ENCODE measurements at regions of chr6 and their contacts with region 1.

Region 1: GRCh38 chr6:112029045-112029822 is 24.7 kb upstream of the CCN6 start:
- DNase-seq: peak; percentile 68
- ATAC-seq: peak; percentile 86
- H3K4me3 ChIP-seq: no peak overlapping the region
- H3K27ac ChIP-seq: no peak overlapping the region
- H3K4me1 ChIP-seq: peaks cover 46% of the 10 kb centered on the region
- H3K27me3 ChIP-seq: peaks cover 0 to 7% of the 10 kb centered on the region in 2 experiments; a peak in 2 of 5 replicates
- CTCF ChIP-seq: peak; percentile 81
- EP300 ChIP-seq: no peak
- POLR2A ChIP-seq: no peak
- RAD21 ChIP-seq: peak; percentile 46; the same call in 1 of the 2 replicates

Region 2: DNA sequence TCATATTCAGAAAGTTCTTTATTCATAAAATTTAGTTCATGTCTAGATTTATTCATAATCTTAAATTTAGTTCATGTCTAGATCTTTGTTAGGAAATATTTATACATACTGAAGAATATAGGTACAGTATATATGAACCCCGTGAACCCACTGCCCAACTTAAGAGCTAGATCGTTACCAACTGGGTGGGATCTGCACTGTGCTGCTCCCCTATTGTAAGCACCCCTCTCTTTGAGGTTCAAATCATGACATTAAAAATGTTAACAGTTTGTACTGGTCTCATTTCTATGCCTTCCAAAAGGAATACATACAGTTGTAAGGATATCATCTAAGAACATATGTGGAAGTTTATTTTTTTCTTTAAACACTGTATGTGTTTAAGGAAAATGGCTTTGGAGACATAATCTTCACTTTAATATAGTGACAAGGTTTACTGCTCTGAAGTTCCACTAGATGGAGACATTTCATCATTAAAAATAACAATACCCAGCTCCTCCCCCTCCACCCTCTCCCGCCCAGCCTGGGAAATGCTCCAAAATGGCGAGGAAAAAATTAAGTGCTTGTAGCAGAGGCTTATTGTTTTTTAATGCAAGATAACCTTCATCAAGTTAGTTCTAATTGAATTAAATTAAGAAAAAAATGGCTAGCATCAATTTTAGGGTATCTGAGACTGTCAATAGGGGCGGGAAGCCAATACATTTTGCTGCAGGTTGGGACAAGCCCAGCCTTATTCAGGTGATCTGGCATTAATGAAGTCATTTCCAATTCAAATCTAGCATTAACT is 319.4 kb before region 1 on chr6:
- CTCF ChIA-PET with region 1: interaction called, 17 read pairs
- POLR2A ChIA-PET with region 1: no interaction called
- in situ Hi-C with region 1: no loop called
- intact Hi-C with region 1: loop called (anchors 1 kb)
- DNase-seq: peak; percentile 68
- ATAC-seq: peak; percentile 97
- H3K4me3 ChIP-seq: no peak overlapping the region
- H3K27ac ChIP-seq: no peak overlapping the region
- H3K4me1 ChIP-seq: no peaks in the 10 kb centered on the region
- H3K27me3 ChIP-seq: no peaks in the 10 kb centered on the region
- CTCF ChIP-seq: peak; percentile 77
- EP300 ChIP-seq: no peak
- POLR2A ChIP-seq: no peak
- RAD21 ChIP-seq: peak; percentile 84

Region 3: GRCh38 chr6:112010328-112010727 is 18.9 kb before region 1 on chr6:
- CTCF ChIA-PET with region 1: interaction called, 5 read pairs
- POLR2A ChIA-PET with region 1: no interaction called
- in situ Hi-C with region 1: no loop called
- intact Hi-C with region 1: loop called (anchors 1 kb)
- DNase-seq: peak; percentile 41
- ATAC-seq: peak; percentile 97
- H3K4me3 ChIP-seq: no peak overlapping the region
- H3K27ac ChIP-seq: no peak overlapping the region
- H3K4me1 ChIP-seq: peaks cover 17% of the 10 kb centered on the region; the same call in 1 of the 2 replicates
- H3K27me3 ChIP-seq: peaks cover 0 to 6% of the 10 kb centered on the region in 2 experiments; a peak in 2 of 5 replicates
- CTCF ChIP-seq: peak; percentile 90
- EP300 ChIP-seq: no peak
- POLR2A ChIP-seq: no peak
- RAD21 ChIP-seq: peak; percentile 65

Region 4: DNA sequence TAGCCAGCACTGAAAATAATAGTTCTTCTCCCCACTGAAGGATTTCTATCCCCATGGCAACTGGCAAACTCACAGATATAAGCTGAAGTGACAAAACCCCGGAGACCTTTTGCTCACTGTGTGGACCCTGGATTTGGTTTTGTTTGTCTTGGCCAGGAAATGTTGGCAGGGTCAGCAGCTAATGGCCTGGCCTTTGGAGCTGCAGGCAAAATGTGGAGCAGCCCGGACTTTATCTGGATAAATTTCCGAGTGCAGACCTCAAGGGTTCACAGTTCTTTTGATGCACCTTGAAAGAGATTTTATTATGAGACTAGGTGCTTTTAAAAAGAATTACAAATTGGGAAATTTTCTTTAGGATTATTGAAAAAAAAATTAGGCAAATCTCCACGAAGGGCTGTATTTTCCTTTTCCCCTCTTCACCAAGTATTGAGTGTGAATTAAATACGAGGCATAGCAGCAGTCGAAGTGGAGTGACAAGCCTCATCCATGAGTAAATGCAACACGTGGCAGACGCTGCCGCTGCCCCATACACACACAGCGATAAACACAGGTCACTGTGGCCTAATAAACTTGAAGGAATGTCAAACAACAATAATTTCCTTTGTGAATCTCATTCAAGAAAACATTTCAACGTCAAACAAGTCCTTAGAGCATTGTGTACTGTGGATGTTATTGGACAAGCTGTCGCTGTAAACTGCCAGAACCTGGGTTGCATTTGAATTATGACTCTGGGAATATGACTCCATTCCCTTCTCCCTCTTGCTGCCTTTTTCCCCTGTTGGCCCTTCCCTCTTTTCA is 10.4 kb before region 1 on chr6:
- CTCF ChIA-PET with region 1: no interaction called
- POLR2A ChIA-PET with region 1: no interaction called
- in situ Hi-C with region 1: no loop called
- intact Hi-C with region 1: loop called (anchors 1 kb)
- DNase-seq: peak; percentile 87
- ATAC-seq: peak; percentile 98
- H3K4me3 ChIP-seq: peak overlapping the region in 2 of 3 experiments; percentile 20 to 44; a peak in 3 of 6 replicates
- H3K27ac ChIP-seq: peak overlapping the region; percentile 64
- H3K4me1 ChIP-seq: peaks cover 32% of the 10 kb centered on the region
- H3K27me3 ChIP-seq: peaks cover 2 to 8% of the 10 kb centered on the region in 2 experiments; a peak in 2 of 5 replicates
- CTCF ChIP-seq: peak; percentile 27; the same call in 1 of the 2 replicates
- EP300 ChIP-seq: peak; percentile 54 to 87; a peak in 3 of 4 replicates
- POLR2A ChIP-seq: no peak
- RAD21 ChIP-seq: no peak

Region 5: DNA sequence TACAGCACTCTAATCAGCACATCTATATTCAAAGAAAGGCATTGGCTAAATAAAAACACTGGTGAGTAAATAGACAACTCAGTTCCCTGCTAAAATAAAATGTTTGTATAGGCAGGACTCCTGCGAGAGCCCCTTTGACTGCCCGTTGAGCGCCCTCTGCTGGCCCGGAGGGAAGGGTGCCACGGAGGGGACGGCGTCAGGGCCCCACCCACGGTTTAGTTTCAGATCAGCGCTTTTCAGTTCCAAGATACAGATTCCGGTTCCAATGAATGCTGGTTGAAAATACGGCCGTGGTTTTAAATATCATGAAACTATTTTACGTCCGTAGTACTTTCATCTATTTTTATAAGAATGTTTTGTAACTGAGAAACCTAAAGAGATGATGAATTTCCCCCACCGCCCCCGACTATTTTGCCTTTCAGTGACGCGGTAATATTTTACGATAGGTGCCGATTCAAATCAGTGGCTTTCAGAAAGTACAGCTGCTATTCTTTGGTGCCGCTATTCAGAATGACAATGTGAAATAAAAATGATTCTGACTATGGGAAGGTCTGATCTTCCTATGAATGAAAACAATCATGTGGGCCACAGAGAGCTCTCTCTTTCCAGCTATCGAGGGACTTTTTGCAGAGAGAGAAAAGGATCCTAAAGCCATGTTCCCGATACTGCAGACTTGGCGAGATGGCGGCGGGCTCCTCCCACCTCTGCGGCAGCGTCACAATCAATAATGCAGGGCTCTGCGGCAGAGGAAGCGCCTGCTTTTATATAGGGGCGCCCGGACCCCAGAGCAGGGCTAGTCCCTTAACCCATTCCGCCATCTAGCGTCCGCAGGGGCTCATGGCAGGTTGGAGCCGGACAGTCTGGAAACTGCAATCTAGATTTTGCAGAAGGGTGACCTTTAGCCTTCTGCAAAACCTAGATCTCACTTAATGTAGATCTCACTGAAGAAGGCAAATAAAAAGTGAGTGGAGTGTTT is 14.1 kb after region 1 on chr6:
- CTCF ChIA-PET with region 1: interaction called, 3 read pairs
- POLR2A ChIA-PET with region 1: no interaction called
- in situ Hi-C with region 1: no loop called
- intact Hi-C with region 1: loop called (anchors 1 kb)
- DNase-seq: peak; percentile 86
- ATAC-seq: peak; percentile 98
- H3K4me3 ChIP-seq: peak overlapping the region; percentile 62 to 93 (median 81)
- H3K27ac ChIP-seq: peak overlapping the region; percentile 31
- H3K4me1 ChIP-seq: peaks cover 4% of the 10 kb centered on the region; the same call in 1 of the 2 replicates
- H3K27me3 ChIP-seq: no peaks in the 10 kb centered on the region; a peak in 1 of 5 replicates
- CTCF ChIP-seq: peak; percentile 96
- EP300 ChIP-seq: no peak
- POLR2A ChIP-seq: no peak
- RAD21 ChIP-seq: peak; percentile 95

Measured in HepG2 (cell line).